ENCODE measurements at regions of chr9 and their contacts with region 1.

Region 1: GRCh38 chr9:21234153-21234687 is 5.6 kb downstream of the IFNA14 start:
- DNase-seq: no peak
- H3K4me3 ChIP-seq: no peak overlapping the region
- H3K27ac ChIP-seq: no peak overlapping the region
- H3K4me1 ChIP-seq: peaks cover 0 to 4% (median 0%) of the 10 kb centered on the region in 4 donors
- H3K27me3 ChIP-seq: no peaks in the 10 kb centered on the region
- CTCF ChIP-seq: no peak
- EP300 ChIP-seq: no peak
- POLR2A ChIP-seq: no peak

Region 2: DNA sequence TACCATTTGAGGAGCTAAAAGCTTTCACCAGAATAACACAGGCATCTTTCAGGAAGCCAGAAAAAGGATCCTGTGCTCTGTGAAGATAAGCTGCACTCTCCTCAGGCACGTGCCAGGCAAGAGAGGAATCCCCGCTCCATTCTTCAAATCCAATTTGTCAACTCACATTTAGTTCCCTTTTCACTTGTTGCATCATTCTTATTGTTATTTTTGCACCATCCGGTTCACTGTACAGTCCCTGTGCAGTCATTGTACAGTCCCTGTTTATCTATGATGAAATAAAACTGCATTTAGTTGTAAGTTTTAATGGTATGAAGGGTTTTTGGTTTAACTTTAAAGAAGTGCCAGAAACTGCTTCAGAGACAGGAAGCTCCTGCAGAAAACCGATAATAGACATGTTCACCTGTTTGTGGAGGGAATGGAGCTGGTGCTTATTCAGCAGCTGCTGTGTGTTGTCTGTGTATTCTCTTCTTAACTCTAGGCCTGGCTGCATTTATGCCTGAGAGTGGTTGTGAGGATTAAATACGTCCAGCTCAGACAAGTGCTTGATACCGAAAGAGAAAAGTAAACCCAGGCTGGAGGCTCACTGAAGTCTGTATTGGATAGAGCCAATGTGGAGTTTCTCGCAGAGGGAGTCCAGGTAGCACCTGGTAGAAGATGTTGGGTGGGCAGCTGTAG is 115.0 kb before region 1 on chr9:
- intact Hi-C with region 1: no loop called
- DNase-seq: no peak
- H3K4me3 ChIP-seq: no peak overlapping the region
- H3K27ac ChIP-seq: no peak overlapping the region
- H3K4me1 ChIP-seq: no peaks in the 10 kb centered on the region
- H3K27me3 ChIP-seq: no peaks in the 10 kb centered on the region
- CTCF ChIP-seq: no peak
- EP300 ChIP-seq: no peak
- POLR2A ChIP-seq: no peak

Region 3: GRCh38 chr9:21174671-21175070 is 59.5 kb before region 1 on chr9:
- intact Hi-C with region 1: no loop called
- DNase-seq: no peak
- H3K4me3 ChIP-seq: no peak overlapping the region
- H3K27ac ChIP-seq: no peak overlapping the region
- H3K4me1 ChIP-seq: no peaks in the 10 kb centered on the region
- H3K27me3 ChIP-seq: no peaks in the 10 kb centered on the region
- CTCF ChIP-seq: no peak
- EP300 ChIP-seq: no peak
- POLR2A ChIP-seq: no peak

Region 4: GRCh38 chr9:21549251-21549765 is 315.1 kb after region 1 on chr9:
- intact Hi-C with region 1: no loop called
- DNase-seq: no peak
- H3K4me3 ChIP-seq: no peak overlapping the region
- H3K27ac ChIP-seq: no peak overlapping the region
- H3K4me1 ChIP-seq: peaks cover 0 to 10% (median 8%) of the 10 kb centered on the region in 4 donors
- H3K27me3 ChIP-seq: peaks cover 0 to 16% (median 0%) of the 10 kb centered on the region in 4 donors
- CTCF ChIP-seq: no peak
- EP300 ChIP-seq: no peak
- POLR2A ChIP-seq: no peak

Region 5: DNA sequence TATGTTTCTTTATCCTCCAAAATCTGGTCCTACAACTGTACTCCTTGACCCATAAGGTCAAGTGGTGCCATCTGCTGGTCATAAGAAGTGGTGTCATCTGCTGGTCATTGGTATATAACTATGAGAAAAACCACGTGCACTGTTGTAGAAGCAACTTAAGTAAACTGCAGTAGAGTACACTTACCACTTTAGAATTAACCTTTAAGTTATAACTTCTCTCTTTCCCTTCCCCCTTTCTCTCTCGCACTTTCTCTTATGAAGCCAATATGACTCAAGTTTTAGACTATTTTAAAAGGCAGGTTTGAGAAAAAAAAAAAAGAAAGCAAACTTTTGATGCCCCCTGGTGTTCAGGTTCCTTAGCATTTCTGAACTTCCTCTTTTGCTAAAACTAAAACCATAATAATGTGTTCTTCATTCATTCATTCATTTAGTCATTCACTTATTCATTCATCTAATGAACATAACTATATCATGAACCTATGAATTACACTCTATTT is 555.4 kb after region 1 on chr9:
- intact Hi-C with region 1: loop called (anchors 2 kb)
- DNase-seq: no peak
- H3K4me3 ChIP-seq: peak overlapping the region in 3 of 4 donors; percentile 14 to 39 (median 21)
- H3K27ac ChIP-seq: no peak overlapping the region
- H3K4me1 ChIP-seq: no peaks in the 10 kb centered on the region
- H3K27me3 ChIP-seq: peaks cover 0 to 20% (median 0%) of the 10 kb centered on the region in 4 donors
- CTCF ChIP-seq: peak; percentile 72 to 86 (median 83)
- EP300 ChIP-seq: no peak
- POLR2A ChIP-seq: no peak

Measured in esophagus muscularis mucosa (tissue), 4 donors.